CD4-positive, alpha-beta memory T cell (primary cell): ENCODE measurements at regions of chr11 and their contacts with region 1.

Region 1: DNA sequence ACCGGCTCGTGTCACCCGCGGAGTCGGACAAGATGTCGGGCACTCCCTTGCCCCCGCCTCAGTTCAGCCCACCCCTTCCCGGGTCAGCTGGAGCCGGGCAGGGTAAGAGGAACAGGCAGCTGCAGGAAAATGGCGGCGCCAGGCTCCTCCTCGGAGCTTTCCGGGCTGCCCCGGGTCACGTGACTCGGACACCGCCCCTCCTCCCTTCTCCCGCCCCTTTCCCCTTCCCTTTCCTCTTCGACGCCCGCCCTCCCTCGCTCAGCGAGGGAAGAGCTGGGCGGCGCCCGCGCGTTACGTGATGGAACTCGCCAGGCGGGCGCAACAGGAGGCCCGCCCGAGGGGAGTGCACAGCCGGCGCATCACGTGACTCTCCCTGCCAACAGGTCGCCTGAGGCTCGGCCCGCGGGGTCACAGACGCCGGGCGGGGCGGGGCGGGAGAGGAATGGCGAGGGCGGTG is at the start of gene PICALM:
- DNase-seq: peak; percentile 94 to 97 (median 97)
- H3K4me3 ChIP-seq: peak within 1 kb of the TSS; percentile 34 to 92
- H3K4me3 Mint-ChIP-seq: peak within 1 kb of the TSS; percentile 93 to 99 (median 98)
- H3K27ac ChIP-seq: peak within 1 kb of the TSS; percentile 81
- H3K27ac Mint-ChIP-seq: peak within 1 kb of the TSS; percentile 89 to 98 (median 96)
- H3K4me1 ChIP-seq: peaks cover 32% of the 10 kb centered on the region
- H3K4me1 Mint-ChIP-seq: peaks cover 18 to 46% (median 28%) of the 10 kb centered on the region in 4 donors
- H3K27me3 ChIP-seq: no peaks in the 10 kb centered on the region
- H3K27me3 Mint-ChIP-seq: peaks cover 0 to 2% of the 10 kb centered on the region in 2 donors
- total RNA-seq, gene PICALM: 127 to 138 TPM

Region 2: GRCh38 chr11:85627998-85628770 is 440.8 kb before region 1 on chr11 and contains the start of gene TMEM126B:
- CTCF ChIA-PET with region 1: no interaction called
- POLR2A ChIA-PET with region 1: interaction called, 11 read pairs
- intact Hi-C with region 1: loop called (anchors 1 kb)
- DNase-seq: peak; percentile 92 to 97 (median 94)
- H3K4me3 ChIP-seq: peak within 1 kb of the TSS; percentile 58 to 73
- H3K4me3 Mint-ChIP-seq: peak within 1 kb of the TSS; percentile 93 to 99 (median 98)
- H3K27ac ChIP-seq: peak within 1 kb of the TSS; percentile 82
- H3K27ac Mint-ChIP-seq: peak within 1 kb of the TSS; percentile 91 to 99 (median 97)
- H3K4me1 ChIP-seq: peaks cover 30% of the 10 kb centered on the region
- H3K4me1 Mint-ChIP-seq: peaks cover 27 to 47% (median 36%) of the 10 kb centered on the region in 4 donors
- H3K27me3 ChIP-seq: no peaks in the 10 kb centered on the region
- H3K27me3 Mint-ChIP-seq: peaks cover 0 to 2% of the 10 kb centered on the region in 2 donors
- total RNA-seq, gene TMEM126B: 40.9 to 46.8 TPM

Region 3: GRCh38 chr11:85826116-85826855 is 242.7 kb before region 1 on chr11:
- CTCF ChIA-PET with region 1: no interaction called
- POLR2A ChIA-PET with region 1: no interaction called
- intact Hi-C with region 1: loop called (anchors 5 kb)
- DNase-seq: peak in 2 of 5 donors; percentile 18 to 29
- H3K4me3 ChIP-seq: no peak overlapping the region
- H3K4me3 Mint-ChIP-seq: peak overlapping the region in 7 of 8 donors; percentile 4 to 76 (median 18)
- H3K27ac ChIP-seq: peak overlapping the region; percentile 6
- H3K27ac Mint-ChIP-seq: peak overlapping the region; percentile 82 to 99 (median 97)
- H3K4me1 ChIP-seq: peaks cover 74% of the 10 kb centered on the region
- H3K4me1 Mint-ChIP-seq: peaks cover 58 to 77% (median 63%) of the 10 kb centered on the region in 4 donors
- H3K27me3 ChIP-seq: no peaks in the 10 kb centered on the region
- H3K27me3 Mint-ChIP-seq: no peaks in the 10 kb centered on the region

Region 4: GRCh38 chr11:86014221-86014620 is 54.8 kb before region 1 on chr11:
- CTCF ChIA-PET with region 1: no interaction called
- POLR2A ChIA-PET with region 1: no interaction called
- intact Hi-C with region 1: no loop called
- DNase-seq: no peak
- H3K4me3 ChIP-seq: no peak overlapping the region
- H3K4me3 Mint-ChIP-seq: no peak overlapping the region
- H3K27ac ChIP-seq: no peak overlapping the region
- H3K27ac Mint-ChIP-seq: peak overlapping the region in 2 of 7 donors; percentile 23 to 35
- H3K4me1 ChIP-seq: no peaks in the 10 kb centered on the region
- H3K4me1 Mint-ChIP-seq: peaks cover 11 to 20% (median 19%) of the 10 kb centered on the region in 4 donors
- H3K27me3 ChIP-seq: no peaks in the 10 kb centered on the region
- H3K27me3 Mint-ChIP-seq: no peaks in the 10 kb centered on the region

Region 5: DNA sequence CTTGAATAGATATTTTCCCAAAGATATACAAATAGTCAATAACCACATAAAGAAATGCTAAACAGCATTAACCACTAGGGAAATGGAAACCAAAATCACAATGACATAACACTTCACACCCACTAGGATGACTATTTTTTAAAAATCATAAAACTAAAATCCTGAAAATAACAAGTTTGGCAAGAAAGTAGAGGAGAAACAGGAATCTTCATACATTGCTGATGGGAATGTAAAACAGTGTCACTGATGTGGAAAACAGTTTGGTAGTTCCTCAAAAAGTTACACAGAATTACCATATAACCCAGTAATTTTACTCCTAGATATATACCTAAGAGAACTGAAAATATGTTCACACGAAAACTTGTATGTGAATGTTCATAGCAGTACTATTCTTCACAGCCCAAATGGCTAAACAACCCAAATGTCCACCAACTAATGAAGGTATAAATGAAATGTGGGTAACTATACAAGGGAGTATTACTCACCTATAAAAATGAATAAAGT is 12.6 kb before region 1 on chr11:
- CTCF ChIA-PET with region 1: interaction called, 7 read pairs
- POLR2A ChIA-PET with region 1: interaction called, 18 read pairs
- intact Hi-C with region 1: no loop called
- DNase-seq: no peak
- H3K4me3 ChIP-seq: no peak overlapping the region
- H3K4me3 Mint-ChIP-seq: peak overlapping the region in 5 of 8 donors; percentile 11 to 61 (median 41)
- H3K27ac ChIP-seq: no peak overlapping the region
- H3K27ac Mint-ChIP-seq: peak overlapping the region; percentile 5 to 74 (median 63)
- H3K4me1 ChIP-seq: peaks cover 97% of the 10 kb centered on the region
- H3K4me1 Mint-ChIP-seq: peaks cover 70 to 97% (median 79%) of the 10 kb centered on the region in 4 donors
- H3K27me3 ChIP-seq: no peaks in the 10 kb centered on the region
- H3K27me3 Mint-ChIP-seq: no peaks in the 10 kb centered on the region

Region 6: DNA sequence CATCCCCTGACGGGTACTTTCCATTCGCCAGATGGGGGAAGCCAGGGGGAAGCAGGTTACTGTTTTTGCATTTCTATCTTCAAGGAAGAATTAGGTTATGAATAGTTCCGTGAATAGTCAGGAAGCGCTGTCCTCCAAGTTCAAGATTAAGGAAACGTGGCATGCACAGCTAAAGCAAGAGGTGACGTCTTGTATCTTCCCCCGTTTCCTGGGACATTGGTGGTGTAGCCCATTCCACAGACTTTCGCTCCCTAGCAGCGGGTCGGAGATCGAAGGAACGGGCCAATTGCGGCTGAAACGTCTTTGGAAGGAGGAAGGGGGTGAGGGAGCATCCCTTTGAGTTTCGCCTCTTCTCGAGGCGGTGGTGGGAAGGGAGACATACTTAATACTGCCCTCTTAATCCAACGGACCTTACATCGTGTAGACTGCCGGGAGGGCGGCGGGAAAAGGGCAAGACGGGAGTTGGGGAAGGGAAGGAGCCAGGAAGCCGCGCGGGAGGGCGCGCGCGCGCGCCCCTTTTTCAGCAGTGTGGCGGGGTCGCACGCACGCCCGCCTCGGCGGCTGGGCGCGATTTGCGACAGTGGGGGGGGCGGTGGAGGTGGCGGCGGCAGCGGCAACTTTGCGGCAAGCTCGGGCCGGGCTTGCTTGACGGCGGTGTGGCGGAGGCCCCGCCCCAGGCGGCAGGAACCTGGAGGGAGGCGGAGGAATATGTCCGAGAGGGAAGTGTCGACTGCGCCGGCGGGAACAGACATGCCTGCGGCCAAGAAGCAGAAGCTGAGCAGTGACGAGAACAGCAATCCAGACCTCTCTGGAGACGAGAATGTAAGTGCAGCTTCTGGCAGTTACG is 175.8 kb after region 1 on chr11 and contains the start of gene EED:
- CTCF ChIA-PET with region 1: no interaction called
- POLR2A ChIA-PET with region 1: interaction called, 40 read pairs
- intact Hi-C with region 1: loop called (anchors 1 kb)
- DNase-seq: peak; percentile 92 to 96 (median 93)
- H3K4me3 ChIP-seq: peak within 1 kb of the TSS; percentile 98 to 99
- H3K4me3 Mint-ChIP-seq: no peak within 1 kb of the TSS
- H3K27ac ChIP-seq: peak within 1 kb of the TSS; percentile 99
- H3K27ac Mint-ChIP-seq: no peak within 1 kb of the TSS
- H3K4me1 ChIP-seq: peaks cover 54% of the 10 kb centered on the region
- H3K4me1 Mint-ChIP-seq: peaks cover 0 to 35% (median 13%) of the 10 kb centered on the region in 4 donors
- H3K27me3 ChIP-seq: no peaks in the 10 kb centered on the region
- H3K27me3 Mint-ChIP-seq: peaks cover 0 to 2% of the 10 kb centered on the region in 2 donors
- total RNA-seq, gene EED: 47.1 to 51.0 TPM